ENCODE measurements at regions of chr20 and their contacts with region 1.

Region 1: DNA sequence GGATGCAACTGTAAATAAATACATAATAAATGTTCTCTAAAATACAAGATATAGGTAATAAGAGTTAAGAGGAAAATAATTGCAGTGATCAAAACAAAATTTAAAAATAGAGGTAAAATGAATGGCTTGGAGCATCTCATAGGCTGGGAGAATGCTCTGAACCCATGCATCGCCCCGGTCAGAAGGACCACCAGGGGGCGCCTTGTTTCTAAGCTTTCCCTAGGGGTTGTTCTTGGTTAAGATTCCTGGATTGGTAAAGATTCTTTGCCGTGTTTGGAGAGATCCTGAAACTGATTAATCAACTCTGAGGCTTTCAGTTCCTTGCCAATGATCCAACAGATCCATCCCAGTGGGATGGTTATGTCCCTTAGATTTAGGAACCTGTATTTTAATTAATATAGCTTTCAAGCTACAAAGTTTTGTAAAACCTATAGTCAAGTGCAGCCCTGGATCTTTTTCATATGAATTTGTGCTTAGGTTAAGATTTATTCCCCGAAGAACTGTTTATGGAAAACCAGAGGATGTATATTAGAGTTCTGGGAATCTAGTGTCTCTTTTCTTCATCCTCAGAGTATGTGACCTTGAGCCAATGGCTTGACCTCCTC is 45.3 kb upstream of the PRELID3B start:
- DNase-seq: peak; percentile 90
- H3K4me3 ChIP-seq: no peak overlapping the region
- H3K27ac ChIP-seq: no peak overlapping the region
- H3K4me1 ChIP-seq: no peaks in the 10 kb centered on the region
- H3K27me3 ChIP-seq: no peaks in the 10 kb centered on the region
- CTCF ChIP-seq: peak; percentile 97

Region 2: GRCh38 chr20:59207742-59208357 is 119.9 kb after region 1 on chr20:
- intact Hi-C with region 1: loop called (anchors 5 kb)
- DNase-seq: peak; percentile 79
- H3K4me3 ChIP-seq: no peak overlapping the region
- H3K27ac ChIP-seq: no peak overlapping the region
- H3K4me1 ChIP-seq: no peaks in the 10 kb centered on the region
- H3K27me3 ChIP-seq: no peaks in the 10 kb centered on the region
- CTCF ChIP-seq: peak; percentile 75

Region 3: GRCh38 chr20:59222253-59223181 is 134.6 kb after region 1 on chr20:
- intact Hi-C with region 1: loop called (anchors 5 kb)
- DNase-seq: peak; percentile 86
- H3K4me3 ChIP-seq: peak overlapping the region; percentile 59
- H3K27ac ChIP-seq: no peak overlapping the region
- H3K4me1 ChIP-seq: no peaks in the 10 kb centered on the region
- H3K27me3 ChIP-seq: peaks cover 3% of the 10 kb centered on the region
- CTCF ChIP-seq: peak; percentile 93

Region 4: DNA sequence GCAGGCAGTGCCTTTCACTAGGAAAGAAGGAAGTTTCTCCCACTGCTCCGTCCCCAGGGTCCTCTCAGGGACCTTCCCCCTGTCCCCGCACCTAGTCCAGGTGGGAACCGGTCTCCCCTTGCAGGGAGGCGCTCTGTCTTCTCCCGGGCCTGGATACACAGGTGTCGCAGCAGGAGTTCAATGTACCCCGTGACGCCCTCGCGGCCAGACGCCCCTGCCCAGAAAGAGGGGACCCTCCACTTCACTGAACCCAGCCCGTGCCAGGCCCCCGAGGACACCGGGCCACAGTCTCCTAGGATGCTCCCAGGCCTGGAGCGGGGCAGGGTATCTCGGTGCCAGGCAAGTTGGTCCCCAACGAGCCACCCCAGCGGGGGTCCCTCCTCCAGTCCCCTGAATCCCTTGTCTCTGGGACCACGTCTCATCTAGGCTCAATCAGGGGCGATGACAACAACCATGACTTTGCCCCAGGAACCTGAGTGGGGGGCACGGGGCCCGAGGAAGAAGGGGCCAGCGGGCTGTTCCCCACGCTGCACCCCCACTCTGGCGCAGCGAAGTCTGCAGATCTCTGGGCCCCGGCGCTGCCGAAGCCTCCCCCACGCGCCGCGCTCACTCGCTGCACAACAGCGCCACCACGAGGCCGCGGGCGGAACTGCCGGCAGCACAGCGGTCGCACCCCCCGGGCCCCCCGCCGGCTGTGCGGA is 315.5 kb after region 1 on chr20:
- intact Hi-C with region 1: loop called (anchors 5 kb)
- DNase-seq: peak; percentile 62
- H3K4me3 ChIP-seq: peak overlapping the region; percentile 12
- H3K27ac ChIP-seq: no peak overlapping the region
- H3K4me1 ChIP-seq: peaks cover 12% of the 10 kb centered on the region
- H3K27me3 ChIP-seq: peaks cover 17% of the 10 kb centered on the region
- CTCF ChIP-seq: peak; percentile 100

Region 5: DNA sequence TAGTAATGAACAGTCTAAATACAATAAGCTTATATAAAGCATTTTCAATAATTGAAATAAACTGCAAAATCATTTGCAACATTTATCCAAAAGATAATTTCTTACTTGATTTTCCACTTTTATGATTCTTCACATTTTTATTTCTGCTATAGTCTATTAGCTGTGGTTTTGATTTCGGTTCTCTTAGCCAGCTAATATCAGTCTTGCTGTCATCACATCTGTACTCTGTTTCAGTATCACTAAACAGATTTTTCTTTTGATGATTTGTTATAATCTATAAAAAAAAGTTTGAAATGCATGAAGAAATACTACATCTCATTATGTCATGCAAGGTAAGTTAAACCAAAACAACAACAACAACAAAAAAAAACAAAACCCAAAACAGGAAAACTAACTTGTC is 792.3 kb after region 1 on chr20:
- intact Hi-C with region 1: no loop called
- DNase-seq: no peak
- H3K4me3 ChIP-seq: no peak overlapping the region
- H3K27ac ChIP-seq: no peak overlapping the region
- H3K4me1 ChIP-seq: no peaks in the 10 kb centered on the region
- H3K27me3 ChIP-seq: no peaks in the 10 kb centered on the region
- CTCF ChIP-seq: no peak